ENCODE measurements at regions of chr17 and their contacts with region 1.

Region 1: DNA sequence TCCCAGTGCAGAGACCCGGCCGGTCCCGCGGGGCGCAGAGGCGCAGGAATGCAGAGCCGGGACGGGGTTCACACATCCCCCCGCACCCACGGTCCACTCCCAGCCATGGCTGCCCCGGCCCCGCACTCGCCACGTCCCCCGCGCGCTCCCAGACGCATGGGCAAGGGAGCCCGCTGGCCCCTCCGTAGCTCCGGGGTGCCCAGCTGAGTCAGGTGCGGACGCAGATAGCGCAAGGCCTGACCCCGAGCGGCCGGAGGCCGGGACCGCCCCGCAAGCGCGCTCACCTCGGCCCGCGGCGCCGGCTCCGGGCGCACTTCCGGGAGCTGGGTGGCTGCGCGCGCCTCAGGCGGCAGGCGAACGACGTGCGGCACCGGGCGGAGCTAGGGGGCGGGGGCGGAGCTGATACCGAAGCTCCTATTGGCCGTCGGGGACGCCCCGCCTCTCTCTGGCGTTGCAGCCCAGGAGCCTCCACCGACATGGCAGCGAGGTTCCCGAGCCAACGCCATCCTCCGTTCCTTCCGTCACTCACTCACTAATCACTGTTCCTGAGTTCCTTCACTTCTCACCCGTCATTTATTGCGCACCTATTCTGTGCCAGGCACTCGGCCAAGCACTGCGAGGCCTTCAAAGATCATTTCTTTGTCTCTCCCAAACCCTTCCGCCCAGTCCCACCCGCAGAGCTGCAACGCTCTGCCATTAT is at the start of gene ZNF18:
- DNase-seq: peak; percentile 94
- H3K4me3 ChIP-seq: peak within 1 kb of the TSS; percentile 91 to 95 (median 92)
- H3K27ac ChIP-seq: peak within 1 kb of the TSS; percentile 54
- H3K4me1 ChIP-seq: peaks cover 3% of the 10 kb centered on the region
- H3K27me3 ChIP-seq: peaks cover 0 to 2% of the 10 kb centered on the region in 2 experiments
- CTCF ChIP-seq: no peak
- POLR2A ChIP-seq: peak; percentile 99
- total RNA-seq, gene ZNF18: 4.2 and 5.8 TPM in 2 replicates

Region 2: GRCh38 chr17:12020642-12021622 is 23.6 kb after region 1 on chr17 and contains the start of gene MAP2K4:
- CTCF ChIA-PET with region 1: interaction called, 20 read pairs
- POLR2A ChIA-PET with region 1: interaction called, 44 read pairs
- dilution Hi-C with region 1: no loop called
- intact Hi-C with region 1: loop called (anchors 1 kb)
- DNase-seq: peak; percentile 91
- H3K4me3 ChIP-seq: peak within 1 kb of the TSS; percentile 78 to 88 (median 88)
- H3K27ac ChIP-seq: peak within 1 kb of the TSS; percentile 66
- H3K4me1 ChIP-seq: peaks cover 11% of the 10 kb centered on the region
- H3K27me3 ChIP-seq: peaks cover 3 to 5% of the 10 kb centered on the region in 2 experiments
- CTCF ChIP-seq: no peak
- POLR2A ChIP-seq: peak; percentile 84
- total RNA-seq, gene MAP2K4: 17.5 and 21.0 TPM in 2 replicates

Region 3: GRCh38 chr17:12085076-12085949 is 88.0 kb after region 1 on chr17:
- CTCF ChIA-PET with region 1: no interaction called
- POLR2A ChIA-PET with region 1: no interaction called
- dilution Hi-C with region 1: no loop called
- intact Hi-C with region 1: no loop called
- DNase-seq: no peak
- H3K4me3 ChIP-seq: no peak overlapping the region
- H3K27ac ChIP-seq: no peak overlapping the region
- H3K4me1 ChIP-seq: peaks cover 13% of the 10 kb centered on the region
- H3K27me3 ChIP-seq: no peaks in the 10 kb centered on the region
- CTCF ChIP-seq: no peak
- POLR2A ChIP-seq: no peak

Region 4: DNA sequence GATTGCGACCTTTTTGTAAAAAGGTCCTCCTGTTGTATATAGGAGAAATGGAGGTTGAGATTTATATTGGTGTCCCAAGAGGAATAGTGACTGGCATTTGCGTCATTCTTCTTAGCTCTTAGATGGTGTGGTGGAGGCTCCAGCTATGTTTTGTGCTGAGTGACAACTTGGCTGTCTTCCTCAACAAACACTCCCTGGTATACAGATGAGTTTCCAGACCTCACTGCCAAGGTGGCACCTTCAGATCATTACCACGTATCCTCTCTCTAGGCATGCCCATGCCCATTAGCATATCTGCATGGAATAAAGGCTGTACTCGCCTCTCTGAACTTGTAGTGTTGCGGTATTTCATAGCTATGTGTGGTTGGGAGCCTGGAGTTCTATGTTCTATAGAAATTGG is 143.4 kb after region 1 on chr17:
- CTCF ChIA-PET with region 1: no interaction called
- POLR2A ChIA-PET with region 1: no interaction called
- dilution Hi-C with region 1: no loop called
- intact Hi-C with region 1: no loop called
- DNase-seq: no peak
- H3K4me3 ChIP-seq: no peak overlapping the region
- H3K27ac ChIP-seq: no peak overlapping the region
- H3K4me1 ChIP-seq: no peaks in the 10 kb centered on the region
- H3K27me3 ChIP-seq: no peaks in the 10 kb centered on the region
- CTCF ChIP-seq: no peak
- POLR2A ChIP-seq: no peak

Region 5: GRCh38 chr17:12193144-12193735 is 195.9 kb after region 1 on chr17:
- CTCF ChIA-PET with region 1: no interaction called
- POLR2A ChIA-PET with region 1: no interaction called
- dilution Hi-C with region 1: no loop called
- intact Hi-C with region 1: no loop called
- DNase-seq: no peak
- H3K4me3 ChIP-seq: no peak overlapping the region
- H3K27ac ChIP-seq: no peak overlapping the region
- H3K4me1 ChIP-seq: no peaks in the 10 kb centered on the region
- H3K27me3 ChIP-seq: no peaks in the 10 kb centered on the region
- CTCF ChIP-seq: no peak
- POLR2A ChIP-seq: no peak

Region 6: DNA sequence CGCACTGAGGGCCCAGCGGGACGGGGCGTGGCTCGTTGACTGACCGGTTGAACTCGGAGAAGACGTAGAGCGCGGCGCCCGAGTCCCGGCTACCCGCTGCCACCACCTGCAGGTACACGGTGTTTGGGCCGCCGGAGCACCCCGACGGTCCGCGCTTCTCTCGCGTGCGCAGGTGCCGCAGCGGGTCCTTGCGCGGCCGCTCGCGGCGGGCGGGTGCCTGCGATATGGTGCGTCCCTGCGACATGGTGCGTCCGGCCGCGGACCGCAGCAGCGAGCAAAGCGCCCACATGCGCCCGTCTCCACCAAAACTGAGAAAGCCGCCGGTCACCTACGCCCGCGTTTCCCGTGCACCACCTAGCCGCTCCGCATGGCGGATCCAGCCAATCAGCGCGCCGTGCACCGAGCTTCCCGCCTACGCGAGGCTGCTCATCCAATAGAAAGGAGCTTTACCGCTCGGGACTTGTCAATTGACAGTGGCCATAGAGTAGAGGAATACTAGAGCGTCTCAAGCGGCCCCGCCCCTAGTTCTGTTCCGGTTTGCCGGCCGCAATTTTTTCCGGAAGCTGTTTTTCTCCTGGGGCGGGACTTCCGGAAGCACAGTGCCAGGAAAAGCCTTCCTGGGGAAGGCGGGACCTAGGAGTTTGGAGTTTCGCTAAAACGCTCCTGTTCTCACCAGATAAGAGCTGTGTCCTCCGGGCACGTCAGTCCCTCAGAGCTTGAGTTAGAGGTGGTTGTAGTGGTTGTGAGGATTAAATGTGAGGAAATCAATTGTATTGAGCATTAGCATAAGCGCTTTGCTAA is 1020.6 kb after region 1 on chr17 and contains the start of gene ELAC2:
- CTCF ChIA-PET with region 1: no interaction called
- POLR2A ChIA-PET with region 1: interaction called, 4 read pairs
- dilution Hi-C with region 1: no loop called
- intact Hi-C with region 1: loop called (anchors 2 kb)
- DNase-seq: peak; percentile 99
- H3K4me3 ChIP-seq: peak within 1 kb of the TSS; percentile 22 to 88 (median 87)
- H3K27ac ChIP-seq: peak within 1 kb of the TSS; percentile 36
- H3K4me1 ChIP-seq: peaks cover 11% of the 10 kb centered on the region
- H3K27me3 ChIP-seq: no peaks in the 10 kb centered on the region
- CTCF ChIP-seq: no peak
- POLR2A ChIP-seq: peak; percentile 96
- total RNA-seq, gene ELAC2: 64.8 and 71.6 TPM in 2 replicates